ENCODE measurements at regions of chr11 and their contacts with region 1.

Region 1: GRCh38 chr11:82900277-82901164 is at the start of gene PRCP:
- DNase-seq: peak; percentile 91 to 97 (median 95)
- ATAC-seq: peak; percentile 92 to 96 (median 93)
- H3K4me3 ChIP-seq: peak within 1 kb of the TSS; percentile 41 to 79 (median 70)
- H3K27ac ChIP-seq: peak within 1 kb of the TSS; percentile 45 to 90 (median 81)
- H3K4me1 ChIP-seq: peaks cover 4 to 15% (median 6%) of the 10 kb centered on the region in 3 donors
- H3K27me3 ChIP-seq: no peaks in the 10 kb centered on the region
- CTCF ChIP-seq: no peak
- total RNA-seq, gene PRCP: 15.3 to 37.8 (median 22.3) TPM

Region 2: DNA sequence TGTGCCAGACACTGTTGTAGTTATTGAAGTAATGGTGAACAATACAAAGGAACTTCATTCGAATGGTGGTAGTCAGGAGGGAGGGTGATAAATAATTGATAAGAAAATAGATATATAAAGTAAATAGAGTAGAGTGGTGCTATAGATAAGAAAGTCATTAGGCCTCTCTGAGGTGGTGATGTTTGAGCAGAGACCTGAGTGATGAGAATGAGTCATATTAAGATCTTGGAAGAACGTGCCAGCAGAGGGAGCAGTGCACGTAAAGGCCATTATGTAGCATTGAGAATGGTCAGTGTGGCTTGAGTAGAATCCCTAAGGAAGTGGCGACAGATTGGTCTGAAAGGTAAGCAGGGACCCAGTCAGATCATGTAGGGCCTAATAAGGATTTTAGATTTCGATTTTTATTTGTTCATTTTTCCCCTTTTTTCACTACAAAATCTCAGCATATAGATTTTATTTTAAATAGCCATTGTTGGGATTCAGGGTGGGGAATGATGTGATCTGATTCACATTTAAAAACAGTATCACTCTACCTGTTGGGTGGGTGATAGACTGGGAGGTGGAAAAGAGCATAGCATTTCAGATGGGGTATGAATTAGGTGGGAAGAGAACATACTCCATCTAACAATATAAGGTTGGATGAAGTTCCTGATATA is 340.9 kb after region 1 on chr11:
- intact Hi-C with region 1: loop called in 1 of 3 experiments (anchors 10 kb)
- DNase-seq: peak in 4 of 6 donors; percentile 32 to 63 (median 40)
- ATAC-seq: peak; percentile 92 to 99 (median 96)
- H3K4me3 ChIP-seq: no peak overlapping the region
- H3K27ac ChIP-seq: no peak overlapping the region
- H3K4me1 ChIP-seq: no peaks in the 10 kb centered on the region
- H3K27me3 ChIP-seq: no peaks in the 10 kb centered on the region
- CTCF ChIP-seq: peak in 3 of 4 donors; percentile 24 to 34 (median 34)

Region 3: DNA sequence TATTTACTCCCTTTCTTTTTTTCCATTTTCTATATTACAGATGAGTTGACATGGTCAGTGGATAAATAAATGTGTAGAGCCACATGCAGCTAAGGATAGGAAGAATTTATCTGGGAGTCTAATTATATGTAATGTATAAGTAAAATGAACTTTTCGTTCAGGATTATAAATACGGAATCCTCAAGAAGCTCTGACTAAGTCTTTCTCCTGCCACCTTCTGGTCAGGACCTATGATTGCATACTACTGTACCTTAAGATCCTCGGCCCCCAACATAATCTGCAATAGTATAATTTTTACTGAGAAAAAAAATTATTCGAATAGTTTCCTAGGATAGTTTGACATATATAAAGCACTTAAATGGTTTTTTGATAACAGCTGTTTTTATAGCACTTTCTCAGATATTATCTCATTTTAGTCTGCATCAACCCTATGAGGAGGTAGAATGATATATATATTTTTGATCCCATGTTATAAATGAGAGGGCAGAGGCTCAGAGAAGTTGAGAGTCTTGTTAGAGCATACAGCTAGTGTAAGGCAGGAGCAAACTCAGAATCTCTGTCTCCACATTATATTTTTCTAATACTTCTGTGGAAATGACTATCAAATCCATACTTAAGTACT is 349.6 kb after region 1 on chr11:
- intact Hi-C with region 1: loop called in 2 of 3 experiments (anchors 10 kb)
- DNase-seq: no peak
- ATAC-seq: peak in 3 of 4 donors; percentile 82 to 88 (median 85)
- H3K4me3 ChIP-seq: no peak overlapping the region
- H3K27ac ChIP-seq: no peak overlapping the region
- H3K4me1 ChIP-seq: no peaks in the 10 kb centered on the region
- H3K27me3 ChIP-seq: no peaks in the 10 kb centered on the region
- CTCF ChIP-seq: peak; percentile 27 to 62 (median 39)

Region 4: DNA sequence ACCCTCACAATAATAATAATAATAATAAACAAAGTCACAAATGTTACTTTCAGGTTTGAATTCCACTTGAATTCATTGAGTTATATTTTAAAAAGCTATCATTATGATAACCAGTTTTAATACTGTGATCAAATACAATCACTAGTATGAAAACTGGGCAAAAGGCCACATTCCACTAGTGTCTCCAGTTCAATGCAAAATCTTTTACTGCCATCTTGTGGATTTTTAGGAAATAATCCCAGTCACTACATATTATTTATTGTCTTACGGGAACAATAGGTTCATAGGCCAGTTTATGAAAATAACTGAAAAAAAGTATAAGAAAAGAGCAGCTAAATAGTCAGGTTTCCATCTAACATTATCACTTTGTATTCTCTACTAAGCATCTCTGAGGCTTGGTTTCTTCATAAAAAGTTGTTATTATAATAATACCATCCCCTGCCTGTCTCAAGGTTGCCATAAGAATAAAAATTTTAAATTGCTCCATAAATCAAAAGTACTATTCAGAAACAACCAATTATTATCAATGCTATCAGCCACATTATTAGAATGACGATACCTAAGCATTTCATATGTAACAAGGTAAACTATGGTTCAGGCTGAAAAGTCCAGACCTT is 919.5 kb after region 1 on chr11:
- intact Hi-C with region 1: loop called in 1 of 3 experiments (anchors 10 kb)
- DNase-seq: peak in 3 of 6 donors; percentile 10 to 29 (median 24)
- ATAC-seq: peak; percentile 80 to 92 (median 90)
- H3K4me3 ChIP-seq: no peak overlapping the region
- H3K27ac ChIP-seq: no peak overlapping the region
- H3K4me1 ChIP-seq: no peaks in the 10 kb centered on the region
- H3K27me3 ChIP-seq: no peaks in the 10 kb centered on the region
- CTCF ChIP-seq: peak; percentile 25 to 52 (median 39)

Measured in pancreas (tissue), 10 donors.